Naive thymus-derived CD4-positive, alpha-beta T cell (primary cell): ENCODE measurements at regions of chr12 and their contacts with region 1.

Region 1: GRCh38 chr12:122225683-122226407 is at the start of gene DIABLO:
- DNase-seq: peak; percentile 97 to 100 (median 100)
- ATAC-seq: peak; percentile 96
- H3K4me3 ChIP-seq: peak within 1 kb of the TSS; percentile 90
- H3K4me3 Mint-ChIP-seq: peak within 1 kb of the TSS; percentile 75 to 95 (median 90)
- H3K27ac ChIP-seq: peak within 1 kb of the TSS; percentile 99
- H3K27ac Mint-ChIP-seq: peak within 1 kb of the TSS; percentile 76 to 96 (median 93)
- H3K4me1 ChIP-seq: peaks cover 24 to 34% of the 10 kb centered on the region in 2 donors
- H3K4me1 Mint-ChIP-seq: peaks cover 23 to 53% (median 47%) of the 10 kb centered on the region in 7 donors
- H3K27me3 ChIP-seq: no peaks in the 10 kb centered on the region
- H3K27me3 Mint-ChIP-seq: no peaks in the 10 kb centered on the region
- total RNA-seq, gene DIABLO: 41.3 to 94.1 (median 50.1) TPM

Region 2: GRCh38 chr12:121712461-121713256 is 513.2 kb before region 1 on chr12 and contains the start of gene TMEM120B:
- CTCF ChIA-PET with region 1: no interaction called
- POLR2A ChIA-PET with region 1: no interaction called
- intact Hi-C with region 1: loop called in 1 of 2 experiments (anchors 10 kb)
- DNase-seq: peak; percentile 75 to 91 (median 86)
- ATAC-seq: peak; percentile 97
- H3K4me3 ChIP-seq: peak within 1 kb of the TSS; percentile 99
- H3K4me3 Mint-ChIP-seq: peak within 1 kb of the TSS; percentile 84 to 97 (median 94)
- H3K27ac ChIP-seq: peak within 1 kb of the TSS; percentile 82
- H3K27ac Mint-ChIP-seq: peak within 1 kb of the TSS; percentile 86 to 96 (median 92)
- H3K4me1 ChIP-seq: peaks cover 11 to 12% of the 10 kb centered on the region in 2 donors
- H3K4me1 Mint-ChIP-seq: peaks cover 7 to 37% (median 26%) of the 10 kb centered on the region in 7 donors
- H3K27me3 ChIP-seq: no peaks in the 10 kb centered on the region
- H3K27me3 Mint-ChIP-seq: no peaks in the 10 kb centered on the region
- total RNA-seq, gene TMEM120B: 7.3 to 14.3 (median 9.2) TPM

Region 3: DNA sequence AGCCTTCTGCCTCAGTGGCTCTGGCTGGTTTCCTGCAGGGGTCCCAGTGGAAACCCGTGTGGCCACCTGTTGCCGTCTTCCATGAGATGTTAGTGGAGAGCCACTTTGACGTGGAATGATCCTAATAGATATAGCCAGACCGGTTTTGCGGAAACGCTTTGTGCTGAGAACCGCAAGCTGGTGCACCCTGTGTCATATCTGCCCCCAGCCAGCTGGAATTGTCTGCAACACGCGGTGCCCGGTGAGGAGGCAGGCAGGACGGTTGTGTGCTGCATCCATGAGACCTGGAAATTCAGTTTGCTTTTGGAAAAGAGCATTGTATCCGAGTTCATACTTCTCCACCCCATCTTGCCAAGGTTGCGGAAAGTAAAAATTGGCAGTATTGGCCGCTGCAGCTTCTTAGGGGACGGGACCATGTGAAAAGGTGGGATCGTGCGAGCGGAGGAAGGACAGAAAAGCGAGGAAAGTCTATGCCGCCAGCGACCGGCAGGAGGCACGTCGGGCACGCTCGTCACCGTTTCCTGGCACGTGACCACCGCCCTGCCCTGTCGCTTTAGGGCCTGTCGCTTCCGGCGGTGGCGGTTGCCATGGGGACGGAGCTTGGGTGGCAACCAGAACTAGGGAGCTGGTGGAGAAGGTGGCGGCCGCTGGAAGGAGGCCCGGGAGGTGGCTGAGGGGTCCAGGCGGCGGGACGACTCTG is 307.7 kb before region 1 on chr12 and contains the start of gene CFAP251:
- CTCF ChIA-PET with region 1: interaction called, 3 read pairs
- POLR2A ChIA-PET with region 1: no interaction called
- intact Hi-C with region 1: loop called (anchors 1 to 10 kb)
- DNase-seq: peak; percentile 88 to 98 (median 94)
- ATAC-seq: peak; percentile 99
- H3K4me3 ChIP-seq: peak within 1 kb of the TSS; percentile 58
- H3K4me3 Mint-ChIP-seq: peak within 1 kb of the TSS; percentile 68 to 94 (median 86)
- H3K27ac ChIP-seq: peak within 1 kb of the TSS; percentile 71
- H3K27ac Mint-ChIP-seq: peak within 1 kb of the TSS; percentile 91 to 98 (median 93)
- H3K4me1 ChIP-seq: peaks cover 4 to 10% of the 10 kb centered on the region in 2 donors
- H3K4me1 Mint-ChIP-seq: peaks cover 8 to 19% (median 13%) of the 10 kb centered on the region in 7 donors
- H3K27me3 ChIP-seq: no peaks in the 10 kb centered on the region
- H3K27me3 Mint-ChIP-seq: no peaks in the 10 kb centered on the region
- total RNA-seq, gene CFAP251: 0.38 to 1.5 (median 0.88) TPM

Region 4: DNA sequence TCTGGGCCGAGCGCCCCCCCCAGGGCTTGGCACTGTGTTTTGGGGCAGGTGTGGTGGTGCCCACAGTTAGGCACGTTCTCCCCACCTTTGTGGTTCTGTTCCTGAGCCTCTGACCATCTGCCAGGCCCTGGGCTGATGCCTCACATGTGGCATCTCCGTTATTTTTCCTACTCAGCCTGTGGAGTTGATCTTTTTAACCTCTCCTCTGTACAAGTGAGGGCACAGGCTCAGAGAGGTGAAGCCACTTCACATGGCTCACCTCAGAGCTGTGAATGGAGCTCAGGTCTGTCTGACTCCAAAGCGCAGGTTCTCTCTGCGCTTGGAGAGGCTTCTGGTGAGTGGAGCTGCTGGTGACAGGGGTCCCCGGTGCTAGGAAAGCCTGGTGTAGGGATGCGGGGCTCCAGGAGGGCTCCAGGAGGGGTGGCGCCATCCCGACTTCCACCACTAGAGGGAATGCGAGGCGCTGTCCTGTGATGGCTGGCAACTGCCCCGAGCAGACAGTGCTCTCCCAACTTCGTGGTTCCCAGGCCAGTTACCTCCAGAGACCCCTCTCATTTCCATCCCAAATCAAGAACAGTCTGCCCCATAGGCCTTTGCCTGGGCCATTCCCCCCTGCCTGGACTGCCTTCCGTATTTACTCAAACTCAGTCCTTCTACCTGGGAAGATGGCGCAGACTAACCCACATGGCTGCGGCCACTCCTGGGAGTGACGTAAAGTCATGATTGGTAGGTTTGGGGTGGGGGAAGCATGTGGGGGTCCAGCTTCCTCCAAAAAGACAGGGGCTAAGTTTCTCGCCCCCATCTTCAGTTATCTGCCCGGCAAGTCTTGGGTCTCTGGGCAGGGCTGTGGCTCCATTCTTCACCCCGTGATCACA is 194.3 kb before region 1 on chr12:
- CTCF ChIA-PET with region 1: no interaction called
- POLR2A ChIA-PET with region 1: no interaction called
- intact Hi-C with region 1: no loop called
- DNase-seq: peak in 5 of 9 donors; percentile 32 to 64 (median 37)
- ATAC-seq: peak; percentile 71
- H3K4me3 ChIP-seq: no peak overlapping the region
- H3K4me3 Mint-ChIP-seq: no peak overlapping the region
- H3K27ac ChIP-seq: no peak overlapping the region
- H3K27ac Mint-ChIP-seq: no peak overlapping the region
- H3K4me1 ChIP-seq: peaks cover 0 to 10% of the 10 kb centered on the region in 2 donors
- H3K4me1 Mint-ChIP-seq: peaks cover 3 to 16% (median 6%) of the 10 kb centered on the region in 7 donors
- H3K27me3 ChIP-seq: no peaks in the 10 kb centered on the region
- H3K27me3 Mint-ChIP-seq: no peaks in the 10 kb centered on the region

Region 5: DNA sequence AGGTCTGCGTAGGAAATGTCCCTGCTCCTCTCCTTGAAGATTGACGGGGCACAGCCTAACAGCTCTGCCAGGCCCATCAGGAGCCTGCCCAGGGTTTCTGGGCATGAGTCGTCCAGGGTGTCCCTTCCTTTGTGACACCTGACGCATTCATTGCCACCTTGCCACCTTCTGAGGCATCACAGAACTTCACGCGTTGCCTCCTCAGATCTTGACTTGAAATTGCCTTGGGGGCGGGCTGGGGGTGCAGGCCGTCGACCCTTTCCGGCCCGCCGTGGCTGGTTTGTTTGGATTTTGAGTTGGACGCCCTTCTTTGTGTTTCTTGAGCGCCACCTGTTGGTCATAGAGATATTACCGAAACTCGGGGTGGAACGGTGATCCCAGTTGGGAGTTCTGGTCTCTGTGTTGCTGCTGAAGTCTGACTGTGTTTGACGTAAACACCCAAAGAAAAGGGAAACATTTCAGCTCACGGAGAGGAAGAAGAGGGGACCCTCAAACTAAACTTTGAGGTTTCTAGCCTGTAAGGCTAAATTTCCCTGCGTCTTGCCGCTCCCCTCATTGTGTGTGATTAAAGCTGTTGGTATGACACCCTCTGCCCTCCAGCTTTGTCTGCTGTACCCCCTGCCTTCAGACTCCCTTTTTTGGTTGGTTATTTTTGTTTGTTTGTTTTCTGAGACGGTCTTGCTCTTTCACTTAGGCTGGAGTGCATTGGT is 102.6 kb before region 1 on chr12:
- CTCF ChIA-PET with region 1: no interaction called
- POLR2A ChIA-PET with region 1: no interaction called
- intact Hi-C with region 1: no loop called
- DNase-seq: peak; percentile 52 to 82 (median 68)
- ATAC-seq: peak; percentile 73
- H3K4me3 ChIP-seq: no peak overlapping the region
- H3K4me3 Mint-ChIP-seq: peak overlapping the region; percentile 26 to 80 (median 59)
- H3K27ac ChIP-seq: peak overlapping the region; percentile 23
- H3K27ac Mint-ChIP-seq: peak overlapping the region; percentile 25 to 94 (median 80)
- H3K4me1 ChIP-seq: peaks cover 7 to 8% of the 10 kb centered on the region in 2 donors
- H3K4me1 Mint-ChIP-seq: peaks cover 30 to 51% (median 45%) of the 10 kb centered on the region in 7 donors
- H3K27me3 ChIP-seq: no peaks in the 10 kb centered on the region
- H3K27me3 Mint-ChIP-seq: no peaks in the 10 kb centered on the region

Region 6: GRCh38 chr12:122265931-122266771 is 40.3 kb after region 1 on chr12 and contains the start of gene VPS33A:
- CTCF ChIA-PET with region 1: interaction called, 8 read pairs
- POLR2A ChIA-PET with region 1: interaction called, 4 read pairs
- intact Hi-C with region 1: loop called (anchors 1 kb)
- DNase-seq: peak; percentile 82 to 96 (median 90)
- ATAC-seq: peak; percentile 89
- H3K4me3 ChIP-seq: peak within 1 kb of the TSS; percentile 74
- H3K4me3 Mint-ChIP-seq: peak within 1 kb of the TSS; percentile 93 to 99 (median 96)
- H3K27ac ChIP-seq: peak within 1 kb of the TSS; percentile 95
- H3K27ac Mint-ChIP-seq: peak within 1 kb of the TSS; percentile 98 to 100 (median 99)
- H3K4me1 ChIP-seq: peaks cover 12 to 17% of the 10 kb centered on the region in 2 donors
- H3K4me1 Mint-ChIP-seq: peaks cover 0 to 37% (median 32%) of the 10 kb centered on the region in 7 donors
- H3K27me3 ChIP-seq: no peaks in the 10 kb centered on the region
- H3K27me3 Mint-ChIP-seq: peaks cover 0 to 6% (median 0%) of the 10 kb centered on the region in 5 donors
- total RNA-seq, gene VPS33A: 19.9 to 34.5 (median 31.4) TPM

Region 7: GRCh38 chr12:122282066-122282465 is 56.2 kb after region 1 on chr12:
- CTCF ChIA-PET with region 1: no interaction called
- POLR2A ChIA-PET with region 1: no interaction called
- intact Hi-C with region 1: no loop called
- DNase-seq: no peak
- ATAC-seq: no peak
- H3K4me3 ChIP-seq: no peak overlapping the region
- H3K4me3 Mint-ChIP-seq: no peak overlapping the region
- H3K27ac ChIP-seq: no peak overlapping the region
- H3K27ac Mint-ChIP-seq: peak overlapping the region in 4 of 9 donors; percentile 12 to 43 (median 30)
- H3K4me1 ChIP-seq: no peaks in the 10 kb centered on the region
- H3K4me1 Mint-ChIP-seq: peaks cover 0 to 5% (median 0%) of the 10 kb centered on the region in 7 donors
- H3K27me3 ChIP-seq: no peaks in the 10 kb centered on the region
- H3K27me3 Mint-ChIP-seq: no peaks in the 10 kb centered on the region

Region 8: DNA sequence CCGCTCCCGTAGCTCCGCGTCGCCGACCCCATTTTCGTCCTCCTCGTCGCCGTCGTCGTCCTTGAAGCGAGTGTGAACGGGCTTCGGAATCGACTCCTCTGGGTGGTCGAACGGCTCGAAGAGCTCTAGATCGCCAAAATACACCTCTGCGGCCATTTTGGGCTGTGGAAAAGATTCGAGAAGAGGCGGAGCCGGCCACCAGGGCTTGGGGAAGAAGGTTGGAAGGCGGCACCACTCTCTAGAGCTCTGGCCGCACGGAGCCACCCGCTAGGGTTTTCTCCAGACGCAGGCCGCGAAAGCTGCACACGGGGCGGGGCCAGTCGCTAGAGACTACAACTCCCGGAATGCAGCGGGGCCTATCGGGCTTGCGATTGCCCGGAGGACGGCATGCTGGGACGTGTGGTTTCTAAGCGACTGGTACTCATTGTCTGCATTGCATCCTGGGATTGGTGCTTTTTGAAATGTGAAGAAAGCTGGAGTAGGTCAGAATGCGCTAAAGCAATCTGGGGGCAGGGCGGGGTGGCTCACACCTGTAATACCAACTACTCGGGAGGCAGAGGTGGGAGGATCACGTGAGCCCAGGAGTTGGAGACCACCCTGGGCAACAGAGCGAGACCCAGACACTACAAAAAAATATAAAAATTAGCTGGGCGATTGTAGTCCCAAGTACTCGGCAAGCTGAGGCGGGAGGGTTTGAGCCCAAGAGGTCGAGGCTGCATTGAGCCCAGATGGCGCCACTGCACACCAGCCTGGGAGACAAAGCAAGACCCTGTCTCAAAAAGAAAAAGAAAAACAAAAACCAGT is 275.0 kb after region 1 on chr12 and contains the start of gene ZCCHC8:
- CTCF ChIA-PET with region 1: no interaction called
- POLR2A ChIA-PET with region 1: interaction called, 13 read pairs
- intact Hi-C with region 1: loop called (anchors 1 kb)
- DNase-seq: peak; percentile 83 to 97 (median 94)
- ATAC-seq: peak; percentile 96
- H3K4me3 ChIP-seq: peak within 1 kb of the TSS; percentile 97
- H3K4me3 Mint-ChIP-seq: peak within 1 kb of the TSS; percentile 83 to 99 (median 96)
- H3K27ac ChIP-seq: peak within 1 kb of the TSS; percentile 92
- H3K27ac Mint-ChIP-seq: peak within 1 kb of the TSS; percentile 89 to 98 (median 96)
- H3K4me1 ChIP-seq: peaks cover 9 to 15% of the 10 kb centered on the region in 2 donors
- H3K4me1 Mint-ChIP-seq: peaks cover 22 to 47% (median 39%) of the 10 kb centered on the region in 7 donors
- H3K27me3 ChIP-seq: no peaks in the 10 kb centered on the region
- H3K27me3 Mint-ChIP-seq: no peaks in the 10 kb centered on the region
- total RNA-seq, gene ZCCHC8: 44.4 to 54.0 (median 46.8) TPM

Region 9: GRCh38 chr12:123633379-123634141 is 1407.7 kb after region 1 on chr12 and contains the starts of genes EIF2B1 and GTF2H3:
- CTCF ChIA-PET with region 1: no interaction called
- POLR2A ChIA-PET with region 1: no interaction called
- intact Hi-C with region 1: loop called in 1 of 2 experiments (anchors 10 kb)
- DNase-seq: peak; percentile 83 to 96 (median 94)
- ATAC-seq: peak; percentile 98
- H3K4me3 ChIP-seq: peak within 1 kb of the TSS; percentile 85
- H3K4me3 Mint-ChIP-seq: peak within 1 kb of the TSS; percentile 89 to 100 (median 96)
- H3K27ac ChIP-seq: peak within 1 kb of the TSS; percentile 91
- H3K27ac Mint-ChIP-seq: peak within 1 kb of the TSS; percentile 91 to 99 (median 96)
- H3K4me1 ChIP-seq: peaks cover 11 to 16% of the 10 kb centered on the region in 2 donors
- H3K4me1 Mint-ChIP-seq: peaks cover 21 to 54% (median 43%) of the 10 kb centered on the region in 7 donors
- H3K27me3 ChIP-seq: no peaks in the 10 kb centered on the region
- H3K27me3 Mint-ChIP-seq: no peaks in the 10 kb centered on the region
- total RNA-seq, gene EIF2B1: 44.0 to 64.3 (median 49.5) TPM
- total RNA-seq, gene GTF2H3: 21.4 to 39.7 (median 27.7) TPM